Activated naive CD4-positive, alpha-beta T cell treated with anti-CD3 and anti-CD28 coated beads for 36 hours (primary cell): ENCODE measurements at regions of chr1 and their contacts with region 1.

Region 1: GRCh38 chr1:56821140-56821797 is 2.1 kb upstream of the FYB2 start:
- DNase-seq: peak; percentile 82
- H3K4me3 Mint-ChIP-seq: no peak overlapping the region
- H3K27ac Mint-ChIP-seq: no peak overlapping the region
- H3K4me1 Mint-ChIP-seq: no peaks in the 10 kb centered on the region
- H3K27me3 Mint-ChIP-seq: peaks cover 34% of the 10 kb centered on the region

Region 2: DNA sequence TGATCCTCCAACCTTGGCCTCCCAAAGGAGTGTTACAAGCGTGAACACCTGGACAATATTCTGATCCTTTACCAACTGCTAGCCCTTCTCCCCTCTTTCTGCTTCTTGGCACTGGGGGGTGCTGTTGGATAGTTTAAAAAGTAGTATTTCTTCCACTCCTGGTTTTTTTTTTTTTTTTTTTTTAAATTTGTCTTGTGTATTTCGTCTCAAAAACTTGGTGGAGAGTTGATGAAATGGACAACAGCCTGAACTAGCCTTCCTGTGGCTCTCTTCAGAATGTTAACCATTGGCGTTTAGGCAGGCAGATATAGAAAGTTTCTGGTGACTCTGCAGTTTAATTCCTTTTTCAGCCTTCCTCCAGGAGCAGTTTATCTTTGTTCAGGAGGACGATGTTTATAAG is 1536.4 kb before region 1 on chr1:
- CTCF ChIA-PET with region 1: no interaction called
- intact Hi-C with region 1: loop called (anchors 5 kb)
- DNase-seq: peak; percentile 52
- H3K4me3 Mint-ChIP-seq: no peak overlapping the region
- H3K27ac Mint-ChIP-seq: no peak overlapping the region
- H3K4me1 Mint-ChIP-seq: peaks cover 25% of the 10 kb centered on the region
- H3K27me3 Mint-ChIP-seq: peaks cover 2% of the 10 kb centered on the region

Region 3: DNA sequence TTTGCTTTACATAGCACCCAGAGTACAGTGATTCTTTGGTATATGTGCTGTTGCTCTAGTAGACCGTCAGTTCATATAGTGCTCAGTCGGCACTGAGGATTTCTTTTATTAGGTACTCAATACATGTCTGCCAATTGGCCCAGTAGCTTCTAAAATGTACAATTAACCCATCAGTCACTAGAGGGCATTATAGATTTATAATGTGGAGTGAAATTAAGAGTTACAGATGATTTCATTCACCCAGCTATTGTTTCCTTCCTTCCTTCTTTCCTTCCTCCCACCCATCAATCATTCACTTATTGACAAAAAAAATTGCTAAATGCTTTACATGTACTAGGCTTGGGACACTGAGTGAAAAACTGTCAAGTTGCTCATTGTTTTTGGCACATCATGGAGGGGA is 1342.5 kb before region 1 on chr1:
- CTCF ChIA-PET with region 1: no interaction called
- intact Hi-C with region 1: loop called (anchors 10 kb)
- DNase-seq: no peak
- H3K4me3 Mint-ChIP-seq: no peak overlapping the region
- H3K27ac Mint-ChIP-seq: no peak overlapping the region
- H3K4me1 Mint-ChIP-seq: no peaks in the 10 kb centered on the region
- H3K27me3 Mint-ChIP-seq: peaks cover 21% of the 10 kb centered on the region

Region 4: DNA sequence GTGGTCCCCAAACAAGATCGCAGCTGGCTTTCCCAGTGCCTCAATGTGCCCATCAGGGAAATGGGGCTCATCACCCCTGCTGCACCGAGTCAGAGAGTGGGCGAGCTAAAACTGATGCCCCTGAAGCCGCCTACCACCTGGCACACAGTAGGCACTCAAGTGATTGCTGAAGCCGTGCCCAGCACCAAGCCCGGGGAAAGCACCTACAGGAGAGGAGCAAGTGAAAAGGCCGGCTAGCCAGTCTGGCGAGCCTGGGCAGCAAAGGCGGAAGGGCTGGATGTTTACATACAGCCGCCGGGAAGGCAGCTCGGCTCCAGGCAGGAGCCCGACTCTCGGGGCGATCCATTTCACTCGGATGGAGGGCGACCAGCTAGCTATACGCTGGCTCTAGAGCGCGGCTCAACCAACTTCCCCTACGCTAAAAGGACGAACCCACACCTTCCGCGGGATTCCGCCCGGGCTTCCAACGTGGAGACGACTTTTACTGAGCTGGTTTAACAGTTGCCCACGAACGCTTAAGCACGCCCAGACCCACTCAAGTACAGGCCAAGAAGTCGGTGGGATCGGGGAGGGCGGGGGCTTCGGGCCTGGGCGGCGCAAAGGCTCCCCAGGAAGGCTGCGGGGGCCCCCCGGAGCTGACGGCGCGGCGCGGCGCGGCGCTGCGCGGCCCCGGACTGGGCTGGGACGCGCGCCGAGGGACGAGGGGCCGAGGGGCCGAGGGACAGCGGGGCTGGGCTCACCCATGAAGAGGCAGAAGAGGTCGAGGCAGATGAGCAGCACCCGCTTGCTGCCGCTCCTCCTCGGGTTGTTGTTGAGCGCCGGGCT is 242.9 kb before region 1 on chr1:
- CTCF ChIA-PET with region 1: no interaction called
- intact Hi-C with region 1: no loop called
- DNase-seq: peak; percentile 5
- H3K4me3 Mint-ChIP-seq: peak overlapping the region; percentile 67
- H3K27ac Mint-ChIP-seq: no peak overlapping the region
- H3K4me1 Mint-ChIP-seq: no peaks in the 10 kb centered on the region
- H3K27me3 Mint-ChIP-seq: peaks cover 46% of the 10 kb centered on the region

Region 5: GRCh38 chr1:56745231-56745630 is 76.0 kb before region 1 on chr1:
- CTCF ChIA-PET with region 1: no interaction called
- intact Hi-C with region 1: no loop called
- DNase-seq: no peak
- H3K4me3 Mint-ChIP-seq: no peak overlapping the region
- H3K27ac Mint-ChIP-seq: no peak overlapping the region
- H3K4me1 Mint-ChIP-seq: no peaks in the 10 kb centered on the region
- H3K27me3 Mint-ChIP-seq: peaks cover 14% of the 10 kb centered on the region

Region 6: GRCh38 chr1:56758135-56758534 is 63.1 kb before region 1 on chr1:
- CTCF ChIA-PET with region 1: no interaction called
- intact Hi-C with region 1: loop called (anchors 5 kb)
- DNase-seq: no peak
- H3K4me3 Mint-ChIP-seq: no peak overlapping the region
- H3K27ac Mint-ChIP-seq: no peak overlapping the region
- H3K4me1 Mint-ChIP-seq: peaks cover 2% of the 10 kb centered on the region
- H3K27me3 Mint-ChIP-seq: peaks cover 11% of the 10 kb centered on the region

Region 7: DNA sequence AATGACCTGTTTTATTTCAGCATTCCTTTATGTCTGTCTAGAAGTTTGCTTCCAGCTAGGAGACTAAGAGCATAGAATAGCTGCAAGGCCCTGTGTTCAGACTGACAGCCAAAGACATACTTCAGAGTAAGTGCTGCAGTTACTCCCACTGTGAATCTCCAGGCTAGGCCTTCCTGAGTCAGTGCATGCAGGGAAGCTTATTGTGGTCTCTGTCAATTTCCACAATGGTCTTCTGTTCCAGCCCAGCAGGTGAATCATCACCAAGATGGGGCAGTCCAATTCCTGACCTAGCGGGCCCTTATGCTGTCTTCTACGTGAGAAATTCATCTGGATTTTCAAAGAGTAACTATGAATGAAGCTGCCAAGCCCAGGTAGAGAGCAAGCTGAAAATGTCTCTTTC is 290.9 kb after region 1 on chr1:
- CTCF ChIA-PET with region 1: no interaction called
- intact Hi-C with region 1: no loop called
- DNase-seq: no peak
- H3K4me3 Mint-ChIP-seq: no peak overlapping the region
- H3K27ac Mint-ChIP-seq: no peak overlapping the region
- H3K4me1 Mint-ChIP-seq: no peaks in the 10 kb centered on the region
- H3K27me3 Mint-ChIP-seq: peaks cover 8% of the 10 kb centered on the region